ENCODE measurements at regions of chr12 and their contacts with region 1.

Region 1: GRCh38 chr12:7933255-7933729 is 2.7 kb downstream of the SLC2A3 start:
- DNase-seq: peak; percentile 65 to 71
- H3K4me3 ChIP-seq: peak overlapping the region; percentile 83 to 98 (median 92); a peak in 5 of 8 replicates
- H3K27ac ChIP-seq: no peak overlapping the region
- H3K4me1 ChIP-seq: peaks cover 0 to 13% (median 3%) of the 10 kb centered on the region in 4 experiments; a peak in 4 of 7 replicates
- H3K27me3 ChIP-seq: no peaks in the 10 kb centered on the region
- CTCF ChIP-seq: peak; percentile 36 to 92 (median 82)
- EP300 ChIP-seq: no peak
- POLR2A ChIP-seq: peak in 1 of 2 experiments; percentile 50; a peak in 1 of 3 replicates
- RAD21 ChIP-seq: peak; percentile 77 to 82

Region 2: GRCh38 chr12:7769999-7770398 is 163.3 kb before region 1 on chr12:
- CTCF ChIA-PET with region 1: no interaction called
- POLR2A ChIA-PET with region 1: no interaction called
- DNase-seq: no peak
- H3K4me3 ChIP-seq: no peak overlapping the region
- H3K27ac ChIP-seq: no peak overlapping the region
- H3K4me1 ChIP-seq: no peaks in the 10 kb centered on the region
- H3K27me3 ChIP-seq: no peaks in the 10 kb centered on the region
- CTCF ChIP-seq: no peak
- EP300 ChIP-seq: no peak
- POLR2A ChIP-seq: no peak
- RAD21 ChIP-seq: no peak

Region 3: DNA sequence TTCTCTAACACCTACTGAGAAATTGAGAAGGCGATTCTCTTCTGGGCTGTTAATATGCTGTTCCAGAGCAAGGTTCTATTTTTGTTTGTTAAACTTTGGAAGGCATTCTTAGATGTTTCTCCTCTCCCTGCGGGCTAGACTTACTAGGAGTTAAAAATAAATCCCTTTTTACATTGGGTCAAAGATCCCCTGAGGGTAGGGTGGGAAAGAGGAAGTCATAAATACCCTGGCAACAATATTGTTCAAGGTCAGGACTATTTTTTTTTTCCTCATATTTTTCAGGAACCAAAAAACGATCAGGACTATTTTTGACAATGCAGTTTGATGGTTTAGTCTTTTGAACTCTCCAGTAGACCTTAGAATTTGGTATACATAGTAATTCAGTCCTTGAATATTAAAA is 48.6 kb before region 1 on chr12:
- CTCF ChIA-PET with region 1: interaction called, 11 read pairs
- POLR2A ChIA-PET with region 1: no interaction called
- DNase-seq: no peak
- H3K4me3 ChIP-seq: no peak overlapping the region
- H3K27ac ChIP-seq: no peak overlapping the region
- H3K4me1 ChIP-seq: peaks cover 0 to 2% (median 0%) of the 10 kb centered on the region in 4 experiments; a peak in 1 of 7 replicates
- H3K27me3 ChIP-seq: no peaks in the 10 kb centered on the region
- CTCF ChIP-seq: no peak
- EP300 ChIP-seq: no peak
- POLR2A ChIP-seq: no peak
- RAD21 ChIP-seq: no peak

Region 4: GRCh38 chr12:7915559-7916403 is 17.5 kb before region 1 on chr12:
- CTCF ChIA-PET with region 1: interaction called, 30 read pairs
- POLR2A ChIA-PET with region 1: interaction called, 189 read pairs
- DNase-seq: peak in 1 of 2 experiments; percentile 55
- H3K4me3 ChIP-seq: no peak overlapping the region
- H3K27ac ChIP-seq: no peak overlapping the region
- H3K4me1 ChIP-seq: peaks cover 0 to 12% (median 3%) of the 10 kb centered on the region in 4 experiments; a peak in 5 of 7 replicates
- H3K27me3 ChIP-seq: no peaks in the 10 kb centered on the region
- CTCF ChIP-seq: no peak
- EP300 ChIP-seq: no peak
- POLR2A ChIP-seq: no peak
- RAD21 ChIP-seq: no peak

Region 5: DNA sequence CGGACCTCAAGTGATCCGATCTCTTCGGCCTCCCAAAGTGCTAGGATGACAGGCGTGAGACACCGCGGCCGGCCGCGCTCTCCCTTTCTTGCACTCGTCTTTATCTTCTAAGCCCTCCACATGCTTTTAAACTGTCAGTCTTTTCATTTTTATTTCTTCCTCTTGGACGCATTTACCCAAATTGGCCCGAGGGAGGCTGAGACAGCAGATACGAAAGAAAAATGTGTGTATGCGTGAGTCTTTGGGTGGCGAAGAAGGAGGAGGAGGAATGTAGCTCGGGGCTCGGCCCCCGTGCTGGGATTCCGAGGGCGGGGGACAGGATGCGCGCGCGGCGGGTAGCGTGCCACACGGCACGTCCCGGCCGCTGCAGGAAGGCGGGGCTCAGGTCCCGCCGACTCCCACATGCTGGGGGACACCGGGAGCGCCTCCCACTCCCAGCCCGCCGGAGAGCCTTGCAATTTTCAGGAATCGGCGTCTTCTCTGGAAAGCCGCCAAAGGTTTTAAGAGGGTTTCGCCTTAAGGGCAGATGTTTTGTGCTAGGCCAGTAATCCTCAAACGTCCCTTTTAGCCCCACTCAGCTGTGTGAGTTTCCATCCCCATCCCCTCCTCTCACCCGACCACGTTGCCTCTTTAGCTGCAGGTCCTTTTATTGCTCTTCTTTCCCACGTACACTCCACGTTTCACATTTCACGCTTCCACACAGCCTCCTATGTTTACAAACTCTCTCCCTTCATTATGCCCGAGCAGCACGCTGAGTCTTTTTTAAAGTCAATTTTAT is 37.4 kb after region 1 on chr12:
- CTCF ChIA-PET with region 1: interaction called, 5 read pairs
- POLR2A ChIA-PET with region 1: interaction called, 300 read pairs
- DNase-seq: peak; percentile 88 to 92
- H3K4me3 ChIP-seq: peak overlapping the region; percentile 12 to 60 (median 32)
- H3K27ac ChIP-seq: peak overlapping the region; percentile 83
- H3K4me1 ChIP-seq: peaks cover 0 to 7% (median 3%) of the 10 kb centered on the region in 4 experiments; a peak in 3 of 7 replicates
- H3K27me3 ChIP-seq: no peaks in the 10 kb centered on the region
- CTCF ChIP-seq: no peak
- EP300 ChIP-seq: peak; percentile 24 to 89; a peak in 2 of 3 replicates
- POLR2A ChIP-seq: peak; percentile 25 to 82
- RAD21 ChIP-seq: 0 out of 4 replicates have a peak, but pooled peaks of 1 of the 2 experiments have one; percentile 1

Region 6: GRCh38 chr12:7995266-7995963 is 62.1 kb after region 1 on chr12:
- CTCF ChIA-PET with region 1: interaction called, 66 read pairs
- POLR2A ChIA-PET with region 1: interaction called, 25 read pairs
- DNase-seq: peak; percentile 38 to 74
- H3K4me3 ChIP-seq: no peak overlapping the region
- H3K27ac ChIP-seq: no peak overlapping the region
- H3K4me1 ChIP-seq: peaks cover 0 to 6% (median 2%) of the 10 kb centered on the region in 4 experiments; a peak in 5 of 7 replicates
- H3K27me3 ChIP-seq: no peaks in the 10 kb centered on the region
- CTCF ChIP-seq: peak; percentile 52 to 85 (median 75)
- EP300 ChIP-seq: no peak
- POLR2A ChIP-seq: no peak
- RAD21 ChIP-seq: peak; percentile 81